Sciatic nerve (tissue), 2 donors: ENCODE measurements at regions of chr12 and their contacts with region 1.

Region 1: GRCh38 chr12:20731274-20731673 is 36.1 kb downstream of the SLCO1C1 start:
- DNase-seq: no peak
- ATAC-seq: no peak

Region 2: DNA sequence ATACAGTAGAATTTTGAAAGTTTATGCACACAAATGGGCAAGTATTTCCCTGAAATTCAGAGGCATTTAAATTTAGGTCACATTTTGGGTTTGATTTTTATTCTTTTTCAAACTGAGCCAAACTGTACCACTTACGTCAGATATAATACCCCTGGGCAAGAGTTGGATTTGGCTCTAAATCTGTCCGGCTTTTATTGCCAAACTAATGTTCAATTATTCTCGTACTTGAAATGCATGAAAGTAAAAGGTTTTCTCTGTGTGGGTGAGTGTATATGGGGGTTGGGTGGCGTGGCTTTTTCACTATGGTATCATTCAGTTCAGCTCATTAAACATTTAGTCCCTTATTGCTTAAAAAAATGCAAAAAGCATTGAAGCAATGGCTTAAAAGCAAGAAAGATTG is 19.8 kb after region 1 on chr12:
- intact Hi-C with region 1: loop called (anchors 1 kb)
- DNase-seq: no peak
- ATAC-seq: no peak